WTC11 (cell line): ENCODE measurements at regions of chr13 and their contacts with region 1.

Region 1: GRCh38 chr13:24727731-24728601 is 36.0 kb upstream of the RNF17 start:
- DNase-seq: peak; percentile 64
- ATAC-seq: peak; percentile 98
- H3K4me3 Mint-ChIP-seq: no peak overlapping the region
- H3K27ac Mint-ChIP-seq: no peak overlapping the region
- H3K4me1 Mint-ChIP-seq: no peaks in the 10 kb centered on the region
- H3K27me3 Mint-ChIP-seq: no peaks in the 10 kb centered on the region; the same call in 1 of the 2 replicates
- CTCF ChIP-seq: peak; percentile 42; the same call in 1 of the 2 replicates

Region 2: DNA sequence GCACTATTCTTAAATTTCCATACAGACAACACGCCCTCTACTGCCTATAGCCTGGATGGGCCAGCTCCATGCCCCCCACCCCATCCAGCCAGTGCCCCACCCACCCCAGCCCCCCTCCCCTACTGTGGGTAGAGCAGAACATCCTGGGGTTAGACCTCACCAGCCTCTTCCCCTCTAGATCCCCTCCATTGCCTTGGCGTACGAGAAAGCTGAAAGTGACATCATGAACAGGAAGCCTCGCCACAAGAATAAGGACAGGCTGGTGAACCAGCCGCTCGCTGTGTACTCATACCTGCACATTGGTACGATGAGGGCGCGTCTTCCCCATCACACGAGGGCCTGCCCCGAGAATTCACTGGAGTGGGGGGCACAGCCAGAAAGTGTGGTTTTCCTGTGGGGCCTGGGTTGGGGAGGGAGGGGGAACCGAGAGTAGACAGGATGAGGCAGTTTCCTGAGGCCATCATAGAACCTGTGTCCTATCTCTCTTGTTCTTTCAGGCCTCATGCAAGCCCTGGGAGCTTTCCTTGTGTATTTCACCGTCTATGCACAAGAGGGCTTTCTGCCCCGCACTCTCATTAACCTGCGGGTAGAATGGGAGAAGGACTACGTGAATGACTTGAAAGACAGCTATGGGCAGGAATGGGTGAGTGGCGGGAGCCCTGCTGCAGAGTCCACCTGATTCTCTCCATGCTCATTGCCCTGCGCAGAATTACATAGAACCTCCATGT is 18.6 kb before region 1 on chr13:
- CTCF ChIA-PET with region 1: interaction called, 10 read pairs
- POLR2A ChIA-PET with region 1: no interaction called
- DNase-seq: no peak
- ATAC-seq: peak; percentile 75
- H3K4me3 Mint-ChIP-seq: no peak overlapping the region
- H3K27ac Mint-ChIP-seq: no peak overlapping the region
- H3K4me1 Mint-ChIP-seq: peaks cover 7% of the 10 kb centered on the region
- H3K27me3 Mint-ChIP-seq: no peaks in the 10 kb centered on the region
- CTCF ChIP-seq: no peak